GM10248 (cell line): ENCODE measurements at regions of chr12 and their contacts with region 1.

Region 1: GRCh38 chr12:6039894-6040568 is 84.4 kb downstream of the VWF start:
- DNase-seq: peak; percentile 71
- CTCF ChIP-seq: peak; percentile 90

Region 2: DNA sequence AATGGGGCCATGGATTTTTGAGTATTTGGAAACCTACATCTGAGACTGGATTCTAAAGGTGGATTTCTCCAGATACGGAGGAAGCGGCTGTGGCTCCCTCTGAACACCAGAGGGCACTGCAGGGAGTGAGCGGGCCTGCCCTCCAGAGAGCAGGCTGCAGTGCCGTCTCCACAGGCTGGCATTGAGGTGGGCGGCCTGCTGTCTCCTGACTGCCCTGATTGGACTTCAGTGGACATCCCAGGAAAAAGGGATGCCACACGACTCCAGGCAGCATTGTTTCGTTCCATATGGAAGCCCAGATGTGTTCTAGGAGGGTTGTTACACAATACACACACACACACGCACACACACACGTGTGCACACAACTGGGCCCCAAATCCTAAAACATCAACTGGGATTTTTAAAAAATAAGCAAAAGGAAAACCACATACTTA is 74.1 kb before region 1 on chr12:
- CTCF ChIA-PET with region 1: interaction called, 11 read pairs
- POLR2A ChIA-PET with region 1: no interaction called
- DNase-seq: peak; percentile 67
- CTCF ChIP-seq: peak; percentile 87

Region 3: DNA sequence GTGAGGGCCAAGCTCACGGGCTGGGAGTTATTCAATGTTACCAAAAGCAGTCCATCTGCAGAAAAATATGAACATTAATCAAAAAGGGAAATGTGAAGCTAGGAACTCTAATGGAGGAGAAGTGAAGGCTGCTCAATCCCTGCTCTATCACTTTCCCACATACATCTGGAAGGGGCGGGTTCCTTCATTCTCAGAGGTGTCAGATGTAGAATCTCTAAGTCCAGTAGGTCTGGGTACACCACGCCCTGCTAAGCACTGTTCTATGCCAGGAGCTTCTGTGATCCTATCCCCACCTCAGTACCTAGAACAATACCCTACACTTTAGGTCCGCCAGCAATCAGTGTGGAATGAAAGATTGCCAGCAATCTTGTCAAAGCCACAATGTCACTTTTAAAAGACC is 57.9 kb before region 1 on chr12:
- CTCF ChIA-PET with region 1: interaction called, 12 read pairs
- POLR2A ChIA-PET with region 1: no interaction called
- DNase-seq: no peak
- CTCF ChIP-seq: no peak

Region 4: GRCh38 chr12:6053541-6053940 is 13.5 kb after region 1 on chr12:
- CTCF ChIA-PET with region 1: interaction called, 31 read pairs
- POLR2A ChIA-PET with region 1: no interaction called
- DNase-seq: no peak
- CTCF ChIP-seq: no peak